ENCODE measurements at regions of chr12 and their contacts with region 1.

Region 1: DNA sequence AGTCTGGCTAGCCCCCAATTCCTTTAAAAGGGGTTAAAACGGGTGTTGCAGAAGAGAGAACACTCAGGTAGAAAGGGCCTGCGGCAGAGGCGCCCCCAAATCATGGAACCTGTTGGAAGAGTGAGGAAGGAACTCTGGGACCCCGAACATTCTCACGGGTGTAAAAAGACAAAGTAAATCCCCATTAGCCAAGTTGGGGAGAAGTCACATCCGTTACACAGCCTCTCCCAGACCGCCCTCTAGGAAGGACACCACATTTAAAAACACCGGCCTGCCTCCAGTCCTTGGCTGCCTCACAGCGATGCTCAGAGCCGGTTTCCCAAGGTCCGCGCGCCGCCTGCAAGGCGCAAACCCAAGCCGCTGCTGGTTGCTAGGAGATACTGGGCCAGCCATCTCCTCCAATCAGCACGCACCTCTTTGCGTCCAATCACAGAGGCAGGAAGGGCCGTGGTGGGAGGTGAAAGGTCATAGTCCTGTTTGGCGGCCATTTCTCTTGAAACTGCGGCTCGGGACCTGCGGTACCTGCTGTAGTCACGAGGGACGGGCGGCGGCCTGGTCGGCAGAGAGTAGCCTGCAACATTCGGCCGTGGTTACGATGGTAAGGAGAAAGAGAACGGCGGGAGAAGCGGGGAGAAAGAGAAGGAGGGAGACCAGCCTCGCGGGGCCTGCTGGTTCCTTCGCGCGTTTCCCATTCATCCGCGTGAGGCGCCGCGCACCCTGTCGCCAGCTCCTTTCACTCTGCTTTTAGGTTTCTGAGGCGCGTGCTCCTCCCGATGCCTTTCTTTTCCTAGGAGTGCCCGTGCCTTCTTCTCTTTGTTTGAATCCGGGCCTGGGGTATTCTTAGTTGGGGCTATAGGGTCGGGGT is at the start of gene SNRPF:
- DNase-seq: peak; percentile 85
- ATAC-seq: peak; percentile 97
- H3K4me3 Mint-ChIP-seq: no peak within 1 kb of the TSS
- H3K27ac Mint-ChIP-seq: peak within 1 kb of the TSS; percentile 4
- H3K4me1 Mint-ChIP-seq: peaks cover 12% of the 10 kb centered on the region
- H3K27me3 Mint-ChIP-seq: peaks cover 8% of the 10 kb centered on the region
- CTCF ChIP-seq: no peak
- total RNA-seq, gene SNRPF: 35.2 and 38.2 TPM in 2 replicates

Region 2: GRCh38 chr12:95548539-95549391 is 309.9 kb before region 1 on chr12:
- CTCF ChIA-PET with region 1: no interaction called
- POLR2A ChIA-PET with region 1: no interaction called
- intact Hi-C with region 1: loop called (anchors 1 kb)
- DNase-seq: peak; percentile 64
- ATAC-seq: peak; percentile 86
- H3K4me3 Mint-ChIP-seq: peak overlapping the region; percentile 91
- H3K27ac Mint-ChIP-seq: peak overlapping the region; percentile 73
- H3K4me1 Mint-ChIP-seq: peaks cover 22% of the 10 kb centered on the region
- H3K27me3 Mint-ChIP-seq: no peaks in the 10 kb centered on the region
- CTCF ChIP-seq: no peak

Region 3: GRCh38 chr12:95574799-95575452 is 283.8 kb before region 1 on chr12:
- CTCF ChIA-PET with region 1: no interaction called
- POLR2A ChIA-PET with region 1: no interaction called
- intact Hi-C with region 1: loop called (anchors 2 kb)
- DNase-seq: no peak
- ATAC-seq: no peak
- H3K4me3 Mint-ChIP-seq: peak overlapping the region; percentile 85
- H3K27ac Mint-ChIP-seq: peak overlapping the region; percentile 97
- H3K4me1 Mint-ChIP-seq: peaks cover 49% of the 10 kb centered on the region
- H3K27me3 Mint-ChIP-seq: peaks cover 2% of the 10 kb centered on the region
- CTCF ChIP-seq: no peak

Region 4: GRCh38 chr12:95740744-95741143 is 118.0 kb before region 1 on chr12:
- CTCF ChIA-PET with region 1: no interaction called
- POLR2A ChIA-PET with region 1: no interaction called
- intact Hi-C with region 1: no loop called
- DNase-seq: no peak
- ATAC-seq: no peak
- H3K4me3 Mint-ChIP-seq: no peak overlapping the region
- H3K27ac Mint-ChIP-seq: no peak overlapping the region
- H3K4me1 Mint-ChIP-seq: no peaks in the 10 kb centered on the region
- H3K27me3 Mint-ChIP-seq: peaks cover 17% of the 10 kb centered on the region
- CTCF ChIP-seq: no peak

Region 5: GRCh38 chr12:95870897-95871296 is 12.2 kb after region 1 on chr12:
- CTCF ChIA-PET with region 1: no interaction called
- POLR2A ChIA-PET with region 1: interaction called, 11 read pairs
- intact Hi-C with region 1: no loop called
- DNase-seq: no peak
- ATAC-seq: no peak
- H3K4me3 Mint-ChIP-seq: no peak overlapping the region
- H3K27ac Mint-ChIP-seq: no peak overlapping the region
- H3K4me1 Mint-ChIP-seq: peaks cover 20% of the 10 kb centered on the region
- H3K27me3 Mint-ChIP-seq: no peaks in the 10 kb centered on the region
- CTCF ChIP-seq: no peak

Region 6: DNA sequence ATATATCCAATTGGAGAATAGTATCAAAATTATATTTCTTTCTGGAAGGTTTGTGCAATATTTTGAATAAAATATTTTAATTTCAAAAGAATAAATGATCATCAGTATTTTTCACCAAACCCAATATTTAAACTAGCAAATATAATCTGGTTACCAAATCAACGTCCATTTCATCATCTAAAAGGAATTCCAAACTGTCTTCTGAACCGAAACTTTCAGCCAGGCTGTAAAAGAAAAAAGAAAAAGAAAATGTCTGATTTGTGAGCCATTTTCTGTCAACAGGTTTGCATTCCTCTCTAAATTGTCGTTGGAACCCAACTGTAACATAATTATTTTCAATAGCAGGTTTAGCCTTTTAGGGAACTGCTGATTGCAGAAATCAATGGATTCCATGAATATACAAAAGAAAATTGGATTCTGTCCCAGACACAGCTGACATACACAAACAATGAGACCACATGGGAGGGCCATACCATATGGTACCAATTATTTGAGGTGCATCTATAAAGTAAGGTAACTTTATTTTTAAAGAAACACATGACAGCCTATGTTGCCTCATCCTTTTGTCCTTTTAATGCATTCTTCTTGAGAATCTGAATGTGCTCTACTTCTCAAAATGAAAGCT is 22.7 kb after region 1 on chr12:
- CTCF ChIA-PET with region 1: no interaction called
- POLR2A ChIA-PET with region 1: no interaction called
- intact Hi-C with region 1: no loop called
- DNase-seq: no peak
- ATAC-seq: no peak
- H3K4me3 Mint-ChIP-seq: no peak overlapping the region
- H3K27ac Mint-ChIP-seq: no peak overlapping the region
- H3K4me1 Mint-ChIP-seq: no peaks in the 10 kb centered on the region
- H3K27me3 Mint-ChIP-seq: peaks cover 2% of the 10 kb centered on the region
- CTCF ChIP-seq: no peak

Region 7: DNA sequence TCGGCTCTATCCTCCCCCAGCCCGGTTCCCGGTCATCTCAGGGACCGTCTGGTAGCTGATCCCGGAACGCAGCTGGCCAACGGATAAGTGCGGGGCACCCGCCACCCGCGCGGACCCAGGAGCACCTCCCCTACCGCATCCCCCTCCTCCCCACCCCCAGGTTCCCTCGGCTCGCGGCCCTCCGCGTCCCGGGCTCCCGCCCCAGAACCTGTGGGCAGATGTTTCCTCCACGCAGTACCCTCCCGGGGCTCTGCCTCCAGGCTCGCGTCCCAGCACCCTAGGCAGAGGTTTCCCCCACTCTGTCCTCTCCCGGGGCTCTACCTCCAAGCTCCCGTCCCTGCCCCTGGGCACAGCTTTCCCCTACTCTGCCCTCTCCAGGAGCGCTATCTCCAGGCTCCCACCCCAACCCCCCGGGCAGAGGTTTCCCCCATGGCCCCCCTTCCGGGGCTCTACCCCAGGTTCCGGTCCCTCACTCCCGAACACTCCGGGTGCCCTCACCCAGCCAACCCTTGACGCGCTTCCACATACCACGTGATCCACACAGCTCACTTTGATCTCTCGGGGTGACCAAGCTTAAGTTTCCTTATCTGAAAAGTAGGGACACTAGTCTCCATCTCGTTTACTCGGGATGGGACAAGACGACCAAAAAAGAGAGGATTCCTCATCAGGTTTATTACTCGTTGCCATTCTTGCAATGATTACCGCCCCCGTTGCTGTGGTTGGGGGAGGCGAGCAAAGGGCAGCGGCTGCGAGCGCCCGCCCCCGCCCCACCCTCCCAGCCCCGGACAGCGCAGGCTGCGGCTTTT is 84.0 kb after region 1 on chr12 and contains the start of gene CCDC38:
- CTCF ChIA-PET with region 1: no interaction called
- POLR2A ChIA-PET with region 1: interaction called, 4 read pairs
- intact Hi-C with region 1: loop called (anchors 1 kb)
- DNase-seq: peak; percentile 67
- ATAC-seq: peak; percentile 92
- H3K4me3 Mint-ChIP-seq: peak within 1 kb of the TSS; percentile 90
- H3K27ac Mint-ChIP-seq: peak within 1 kb of the TSS; percentile 83
- H3K4me1 Mint-ChIP-seq: peaks cover 10% of the 10 kb centered on the region
- H3K27me3 Mint-ChIP-seq: no peaks in the 10 kb centered on the region
- CTCF ChIP-seq: no peak
- total RNA-seq, gene CCDC38: 0.09 and 0.42 TPM in 2 replicates

Region 8: DNA sequence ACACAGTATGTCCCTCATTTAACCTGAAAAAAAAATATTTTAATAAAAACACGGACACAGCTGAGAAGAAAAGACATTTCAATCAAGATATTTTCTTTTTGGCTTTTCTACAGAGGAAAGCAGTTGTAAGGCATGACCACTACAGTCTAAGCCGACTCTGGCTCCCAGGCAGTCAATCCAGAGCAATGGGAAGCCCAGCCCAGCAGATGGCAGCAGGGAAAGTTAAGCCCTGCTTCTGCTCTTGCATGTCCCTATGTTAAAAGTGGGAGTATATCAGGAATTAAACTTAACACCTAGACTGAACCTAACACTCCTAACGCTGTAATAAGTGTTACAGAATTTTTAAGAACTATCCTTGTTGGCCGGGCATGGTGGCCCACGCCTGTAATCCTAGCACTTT is 157.0 kb after region 1 on chr12:
- CTCF ChIA-PET with region 1: no interaction called
- POLR2A ChIA-PET with region 1: no interaction called
- intact Hi-C with region 1: no loop called
- DNase-seq: no peak
- ATAC-seq: no peak
- H3K4me3 Mint-ChIP-seq: no peak overlapping the region
- H3K27ac Mint-ChIP-seq: no peak overlapping the region
- H3K4me1 Mint-ChIP-seq: peaks cover 16% of the 10 kb centered on the region
- H3K27me3 Mint-ChIP-seq: no peaks in the 10 kb centered on the region
- CTCF ChIP-seq: no peak

Region 9: GRCh38 chr12:96035278-96036236 is 176.8 kb after region 1 on chr12 and contains the start of gene LTA4H:
- CTCF ChIA-PET with region 1: no interaction called
- POLR2A ChIA-PET with region 1: no interaction called
- intact Hi-C with region 1: loop called (anchors 1 kb)
- DNase-seq: peak; percentile 88
- ATAC-seq: peak; percentile 86
- H3K4me3 Mint-ChIP-seq: no peak within 1 kb of the TSS
- H3K27ac Mint-ChIP-seq: no peak within 1 kb of the TSS
- H3K4me1 Mint-ChIP-seq: peaks cover 26% of the 10 kb centered on the region
- H3K27me3 Mint-ChIP-seq: no peaks in the 10 kb centered on the region
- CTCF ChIP-seq: no peak
- total RNA-seq, gene LTA4H: 119 and 124 TPM in 2 replicates

Region 10: GRCh38 chr12:96906849-96907670 is 1048.3 kb after region 1 on chr12 and contains the start of gene NEDD1:
- CTCF ChIA-PET with region 1: no interaction called
- POLR2A ChIA-PET with region 1: no interaction called
- intact Hi-C with region 1: loop called (anchors 2 kb)
- DNase-seq: peak; percentile 85
- ATAC-seq: peak; percentile 85
- H3K4me3 Mint-ChIP-seq: peak within 1 kb of the TSS; percentile 95
- H3K27ac Mint-ChIP-seq: peak within 1 kb of the TSS; percentile 91
- H3K4me1 Mint-ChIP-seq: peaks cover 41% of the 10 kb centered on the region
- H3K27me3 Mint-ChIP-seq: peaks cover 2% of the 10 kb centered on the region
- CTCF ChIP-seq: no peak
- total RNA-seq, gene NEDD1: 15.0 and 16.3 TPM in 2 replicates

Measured in activated B cell treated with CpG ODN at 0.5 μM for 24 hours (primary cell).